ENCODE measurements at regions of chr1 and their contacts with region 1.

Region 1: GRCh38 chr1:119662034-119662437 is 14.0 kb upstream of the ZNF697 start:
- H3K4me3 Mint-ChIP-seq: no peak overlapping the region
- H3K27ac Mint-ChIP-seq: no peak overlapping the region
- H3K4me1 Mint-ChIP-seq: peaks cover 6% of the 10 kb centered on the region
- H3K27me3 Mint-ChIP-seq: peaks cover 12% of the 10 kb centered on the region

Region 2: GRCh38 chr1:119613769-119614720 is 48.0 kb before region 1 on chr1:
- intact Hi-C with region 1: loop called (anchors 1 kb)
- H3K4me3 Mint-ChIP-seq: no peak overlapping the region
- H3K27ac Mint-ChIP-seq: no peak overlapping the region
- H3K4me1 Mint-ChIP-seq: peaks cover 43% of the 10 kb centered on the region
- H3K27me3 Mint-ChIP-seq: no peaks in the 10 kb centered on the region

Region 3: GRCh38 chr1:119647734-119648619 is 14.1 kb before region 1 on chr1 and contains the start of gene ZNF697:
- intact Hi-C with region 1: loop called (anchors 2 kb)
- H3K4me3 Mint-ChIP-seq: peak within 1 kb of the TSS; percentile 97
- H3K27ac Mint-ChIP-seq: peak within 1 kb of the TSS; percentile 94
- H3K4me1 Mint-ChIP-seq: peaks cover 53% of the 10 kb centered on the region
- H3K27me3 Mint-ChIP-seq: peaks cover 41% of the 10 kb centered on the region

Region 4: GRCh38 chr1:119711804-119712341 is 49.8 kb after region 1 on chr1 and contains the start of gene PHGDH:
- intact Hi-C with region 1: no loop called
- H3K4me3 Mint-ChIP-seq: peak within 1 kb of the TSS; percentile 78
- H3K27ac Mint-ChIP-seq: peak within 1 kb of the TSS; percentile 47
- H3K4me1 Mint-ChIP-seq: peaks cover 36% of the 10 kb centered on the region
- H3K27me3 Mint-ChIP-seq: peaks cover 26% of the 10 kb centered on the region

Region 5: DNA sequence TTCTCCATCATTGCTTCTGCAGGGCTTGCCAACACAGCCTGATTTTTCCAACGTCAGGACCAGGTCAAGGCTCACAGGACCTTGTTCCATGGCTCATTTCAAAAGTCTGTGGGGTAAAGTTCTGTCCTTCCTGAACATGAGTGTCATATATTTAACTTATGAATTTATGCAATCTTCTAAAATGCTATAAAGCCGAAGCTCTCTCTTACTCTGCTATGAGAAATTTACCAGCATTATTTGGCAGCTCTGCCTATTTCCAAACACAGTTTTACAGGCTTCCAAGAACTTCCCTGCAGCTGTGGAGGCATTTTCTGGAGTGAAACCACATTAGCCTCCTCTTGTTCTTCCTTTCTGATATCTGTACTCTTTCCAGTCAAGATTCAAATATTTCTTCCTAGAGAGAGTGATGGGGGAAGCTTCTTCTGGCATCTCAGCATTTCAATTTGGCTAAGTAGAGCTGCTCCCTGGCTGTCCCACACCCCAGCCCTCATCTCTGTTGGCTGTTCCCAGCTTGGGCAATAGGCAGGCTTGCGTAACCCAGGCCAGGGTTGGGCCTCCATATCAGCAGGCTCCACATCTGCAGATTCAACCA is 122.3 kb after region 1 on chr1:
- intact Hi-C with region 1: no loop called
- H3K4me3 Mint-ChIP-seq: no peak overlapping the region
- H3K27ac Mint-ChIP-seq: peak overlapping the region; percentile 29
- H3K4me1 Mint-ChIP-seq: peaks cover 53% of the 10 kb centered on the region
- H3K27me3 Mint-ChIP-seq: no peaks in the 10 kb centered on the region

Measured in dendritic cell treated with granulocyte-macrophage colony-stimulating factor and Interleukin-4, amounts not matched to agents 40 ng/mL and 50 ng/mL, for 4 days (primary cell).